ENCODE measurements at regions of chr5 and their contacts with region 1.

Region 1: GRCh38 chr5:150656191-150657132 is 4.6 kb upstream of the MYOZ3 start:
- DNase-seq: peak; percentile 82
- ATAC-seq: peak; percentile 64
- H3K4me3 Mint-ChIP-seq: peak overlapping the region; percentile 73
- H3K27ac Mint-ChIP-seq: peak overlapping the region; percentile 76; the same call in 1 of the 2 replicates
- H3K4me1 Mint-ChIP-seq: peaks cover 27% of the 10 kb centered on the region
- H3K27me3 Mint-ChIP-seq: peaks cover 12% of the 10 kb centered on the region
- CTCF ChIP-seq: peak; percentile 55; the same call in 1 of the 2 replicates

Region 2: GRCh38 chr5:150458819-150459557 is 197.5 kb before region 1 on chr5:
- CTCF ChIA-PET with region 1: interaction called, 15 read pairs
- POLR2A ChIA-PET with region 1: no interaction called
- DNase-seq: peak; percentile 91
- ATAC-seq: peak; percentile 67
- H3K4me3 Mint-ChIP-seq: peak overlapping the region; percentile 15; the same call in 1 of the 2 replicates
- H3K27ac Mint-ChIP-seq: no peak overlapping the region
- H3K4me1 Mint-ChIP-seq: peaks cover 43% of the 10 kb centered on the region
- H3K27me3 Mint-ChIP-seq: no peaks in the 10 kb centered on the region
- CTCF ChIP-seq: peak; percentile 87

Region 3: DNA sequence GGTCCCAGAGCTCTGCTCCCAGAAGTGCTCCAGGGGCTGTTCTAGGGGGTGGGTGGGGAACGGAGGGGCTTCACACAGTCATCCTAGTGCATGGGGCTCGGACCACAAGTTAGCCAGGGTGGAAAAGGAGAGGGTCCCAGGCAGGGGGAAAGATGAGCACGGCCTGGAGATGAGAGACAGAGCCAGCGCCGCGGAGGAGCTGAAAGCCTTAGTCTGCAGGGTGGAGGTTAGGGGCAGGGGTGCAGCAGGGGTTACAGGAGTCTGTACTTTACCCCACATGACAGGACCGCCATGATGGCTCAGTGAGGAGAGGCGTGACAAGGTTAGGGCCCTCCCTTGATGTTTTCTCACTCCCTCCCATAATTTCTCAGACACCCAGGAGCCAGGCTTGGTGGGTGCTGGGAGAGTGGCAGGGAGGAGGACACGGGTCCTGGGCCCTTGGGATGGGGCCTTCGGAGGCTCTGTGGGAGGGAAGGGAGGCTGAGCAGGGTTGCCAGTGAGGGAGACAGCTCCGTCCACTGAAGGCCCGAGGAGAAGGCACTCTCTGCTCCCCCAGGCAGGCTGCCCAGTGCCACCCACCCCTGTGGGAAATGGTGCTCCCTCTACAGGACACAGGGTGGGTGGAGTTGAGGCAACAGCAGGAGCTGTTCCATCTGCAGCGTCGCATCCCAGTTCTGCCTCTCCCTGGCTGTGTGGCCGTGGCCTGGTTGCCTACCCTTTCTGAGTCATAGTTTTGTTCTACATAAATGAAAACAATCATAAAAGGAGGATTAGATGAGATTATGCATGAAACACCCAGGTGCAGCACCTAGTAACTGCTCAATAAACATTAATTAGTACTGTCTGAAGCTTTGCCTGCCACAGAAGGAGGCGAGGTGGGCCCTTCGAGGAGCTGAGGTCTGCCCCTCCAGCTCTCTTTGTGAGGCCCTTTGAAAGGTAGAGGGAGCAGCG is 82.3 kb before region 1 on chr5:
- CTCF ChIA-PET with region 1: interaction called, 14 read pairs
- POLR2A ChIA-PET with region 1: no interaction called
- DNase-seq: no peak
- ATAC-seq: peak; percentile 80
- H3K4me3 Mint-ChIP-seq: no peak overlapping the region
- H3K27ac Mint-ChIP-seq: no peak overlapping the region
- H3K4me1 Mint-ChIP-seq: no peaks in the 10 kb centered on the region
- H3K27me3 Mint-ChIP-seq: no peaks in the 10 kb centered on the region
- CTCF ChIP-seq: no peak

Region 4: GRCh38 chr5:150599917-150600499 is 56.5 kb before region 1 on chr5:
- CTCF ChIA-PET with region 1: no interaction called
- POLR2A ChIA-PET with region 1: no interaction called
- DNase-seq: no peak
- ATAC-seq: no peak
- H3K4me3 Mint-ChIP-seq: no peak overlapping the region
- H3K27ac Mint-ChIP-seq: no peak overlapping the region
- H3K4me1 Mint-ChIP-seq: peaks cover 12% of the 10 kb centered on the region
- H3K27me3 Mint-ChIP-seq: no peaks in the 10 kb centered on the region
- CTCF ChIP-seq: no peak

Region 5: GRCh38 chr5:150630461-150631335 is 25.8 kb before region 1 on chr5:
- CTCF ChIA-PET with region 1: interaction called, 12 read pairs
- POLR2A ChIA-PET with region 1: no interaction called
- DNase-seq: no peak
- ATAC-seq: no peak
- H3K4me3 Mint-ChIP-seq: no peak overlapping the region
- H3K27ac Mint-ChIP-seq: peak overlapping the region; percentile 33; the same call in 1 of the 2 replicates
- H3K4me1 Mint-ChIP-seq: peaks cover 4% of the 10 kb centered on the region; the same call in 1 of the 2 replicates
- H3K27me3 Mint-ChIP-seq: peaks cover 7% of the 10 kb centered on the region
- CTCF ChIP-seq: no peak

Region 6: GRCh38 chr5:150672237-150672883 is 15.9 kb after region 1 on chr5:
- CTCF ChIA-PET with region 1: interaction called, 31 read pairs
- POLR2A ChIA-PET with region 1: interaction called, 3 read pairs
- DNase-seq: peak; percentile 85
- ATAC-seq: peak; percentile 73
- H3K4me3 Mint-ChIP-seq: peak overlapping the region; percentile 84
- H3K27ac Mint-ChIP-seq: peak overlapping the region; percentile 96
- H3K4me1 Mint-ChIP-seq: peaks cover 31% of the 10 kb centered on the region
- H3K27me3 Mint-ChIP-seq: no peaks in the 10 kb centered on the region
- CTCF ChIP-seq: no peak

Region 7: GRCh38 chr5:151686674-151687407 is 1030.4 kb after region 1 on chr5 and contains the start of gene SPARC:
- CTCF ChIA-PET with region 1: no interaction called
- POLR2A ChIA-PET with region 1: no interaction called
- DNase-seq: peak; percentile 78
- ATAC-seq: peak; percentile 93
- H3K4me3 Mint-ChIP-seq: peak within 1 kb of the TSS; percentile 87
- H3K27ac Mint-ChIP-seq: peak within 1 kb of the TSS; percentile 84
- H3K4me1 Mint-ChIP-seq: peaks cover 41% of the 10 kb centered on the region
- H3K27me3 Mint-ChIP-seq: no peaks in the 10 kb centered on the region
- CTCF ChIP-seq: no peak
- total RNA-seq, gene SPARC: 357 to 418 TPM (median 358 TPM) in 3 replicates

Measured in WTC11 (cell line).